ENCODE measurements at regions of chr6 and their contacts with region 1.

Region 1: DNA sequence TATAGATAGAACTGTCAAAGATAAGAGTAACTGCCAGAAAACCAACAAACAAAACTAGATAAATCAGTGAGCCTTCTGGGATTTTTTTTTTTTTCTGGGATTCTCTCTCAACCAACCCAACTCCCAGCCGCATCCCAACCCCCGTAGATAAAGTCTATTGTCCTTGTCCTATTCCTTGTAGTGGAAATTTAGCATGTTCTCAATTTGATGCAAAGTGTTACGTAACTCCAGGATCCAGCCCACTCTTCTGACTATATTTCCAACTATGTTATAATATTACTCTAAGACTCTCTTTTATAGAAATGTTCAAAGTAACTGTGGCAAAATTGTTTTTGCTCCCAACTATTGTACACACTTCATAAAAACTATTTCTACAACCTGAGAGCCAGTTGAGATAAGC is 15.4 kb upstream of the CDYL start:
- DNase-seq: no peak
- ATAC-seq: no peak
- H3K4me3 ChIP-seq: no peak overlapping the region
- H3K27ac ChIP-seq: no peak overlapping the region
- H3K4me1 ChIP-seq: no peaks in the 10 kb centered on the region
- H3K27me3 ChIP-seq: no peaks in the 10 kb centered on the region
- CTCF ChIP-seq: no peak
- POLR2A ChIP-seq: no peak

Region 2: GRCh38 chr6:4647414-4648365 is 113.1 kb before region 1 on chr6:
- in situ Hi-C with region 1: loop called in 1 of 4 experiments (anchors 10 kb)
- intact Hi-C with region 1: no loop called
- DNase-seq: peak; percentile 80 to 85
- ATAC-seq: peak; percentile 96
- H3K4me3 ChIP-seq: peak overlapping the region; percentile 44 to 56 (median 50)
- H3K27ac ChIP-seq: peak overlapping the region; percentile 80 to 85 (median 84)
- H3K4me1 ChIP-seq: peaks cover 4 to 6% of the 10 kb centered on the region in 2 donors
- H3K27me3 ChIP-seq: no peaks in the 10 kb centered on the region
- CTCF ChIP-seq: peak in 1 of 5 experiments; percentile 10
- POLR2A ChIP-seq: peak; percentile 64 to 70

Region 3: GRCh38 chr6:4675106-4675505 is 85.7 kb before region 1 on chr6:
- in situ Hi-C with region 1: no loop called
- intact Hi-C with region 1: no loop called
- DNase-seq: no peak
- ATAC-seq: no peak
- H3K4me3 ChIP-seq: no peak overlapping the region
- H3K27ac ChIP-seq: no peak overlapping the region
- H3K4me1 ChIP-seq: no peaks in the 10 kb centered on the region
- H3K27me3 ChIP-seq: no peaks in the 10 kb centered on the region
- CTCF ChIP-seq: no peak
- POLR2A ChIP-seq: no peak